GM12878 (cell line): ENCODE measurements at regions of chrX and their contacts with region 1.

Region 1: GRCh38 chrX:37825209-37825842 is 22.0 kb downstream of the DYNLT3 start:
- DNase-seq: no peak
- ATAC-seq: peak; percentile 89
- H3K4me3 ChIP-seq: no peak overlapping the region
- H3K27ac ChIP-seq: no peak overlapping the region
- H3K4me1 ChIP-seq: peaks cover 7% of the 10 kb centered on the region
- H3K27me3 ChIP-seq: no peaks in the 10 kb centered on the region
- CTCF ChIP-seq: peak; percentile 81 to 98 (median 96)
- EP300 ChIP-seq: no peak
- POLR2A ChIP-seq: no peak
- RAD21 ChIP-seq: peak; percentile 99

Region 2: GRCh38 chrX:37745354-37745753 is 80.0 kb before region 1 on chrX:
- CTCF ChIA-PET with region 1: interaction called, 376 read pairs
- POLR2A ChIA-PET with region 1: interaction called, 9 read pairs
- RAD21 ChIA-PET with region 1: interaction called, 186 read pairs
- SMC1A ChIA-PET with region 1: interaction called, 264 read pairs
- in situ Hi-C with region 1: loop called (anchors 5 kb)
- intact Hi-C with region 1: loop called (anchors 1 kb)
- DNase-seq: peak; percentile 53
- ATAC-seq: peak; percentile 86
- H3K4me3 ChIP-seq: no peak overlapping the region
- H3K27ac ChIP-seq: peak overlapping the region; percentile 69
- H3K4me1 ChIP-seq: peaks cover 15% of the 10 kb centered on the region
- H3K27me3 ChIP-seq: no peaks in the 10 kb centered on the region; a peak in 1 of 4 replicates
- CTCF ChIP-seq: peak; percentile 84 to 91 (median 84)
- EP300 ChIP-seq: no peak
- POLR2A ChIP-seq: no peak
- RAD21 ChIP-seq: peak; percentile 97

Region 3: GRCh38 chrX:37776283-37776986 is 48.9 kb before region 1 on chrX:
- CTCF ChIA-PET with region 1: interaction called, 73 read pairs
- POLR2A ChIA-PET with region 1: interaction called, 4 read pairs
- RAD21 ChIA-PET with region 1: interaction called, 29 read pairs
- SMC1A ChIA-PET with region 1: interaction called, 138 read pairs
- in situ Hi-C with region 1: no loop called
- intact Hi-C with region 1: no loop called
- DNase-seq: no peak
- ATAC-seq: peak; percentile 80
- H3K4me3 ChIP-seq: peak overlapping the region; percentile 23; the same call in 1 of the 2 replicates
- H3K27ac ChIP-seq: peak overlapping the region; percentile 85
- H3K4me1 ChIP-seq: peaks cover 22% of the 10 kb centered on the region
- H3K27me3 ChIP-seq: no peaks in the 10 kb centered on the region
- CTCF ChIP-seq: no peak
- EP300 ChIP-seq: no peak
- POLR2A ChIP-seq: no peak
- RAD21 ChIP-seq: no peak

Region 4: DNA sequence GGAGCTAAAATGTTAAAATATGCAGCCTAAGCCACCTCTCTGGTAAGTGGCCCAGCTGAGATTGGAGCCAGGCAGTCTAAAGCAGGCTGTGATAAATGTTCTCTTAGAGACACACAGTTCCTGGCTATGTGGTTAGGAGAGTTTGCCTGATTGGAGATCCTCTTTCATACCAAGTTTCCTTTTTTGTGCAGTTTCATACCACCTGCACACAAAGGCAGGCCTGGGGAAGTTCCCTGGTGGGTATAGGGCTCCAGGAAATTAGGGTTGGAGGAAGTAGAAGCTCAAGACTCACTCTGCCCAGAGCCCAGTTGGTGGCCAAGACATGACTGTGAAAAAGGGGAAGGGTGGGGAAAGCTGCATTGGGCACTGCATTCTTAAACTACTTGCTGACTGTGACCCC is 28.5 kb before region 1 on chrX:
- CTCF ChIA-PET with region 1: interaction called, 17 read pairs
- POLR2A ChIA-PET with region 1: no interaction called
- RAD21 ChIA-PET with region 1: interaction called, 7 read pairs
- SMC1A ChIA-PET with region 1: interaction called, 21 read pairs
- in situ Hi-C with region 1: no loop called
- intact Hi-C with region 1: no loop called
- DNase-seq: no peak
- ATAC-seq: peak; percentile 81
- H3K4me3 ChIP-seq: no peak overlapping the region
- H3K27ac ChIP-seq: peak overlapping the region; percentile 38
- H3K4me1 ChIP-seq: peaks cover 21% of the 10 kb centered on the region
- H3K27me3 ChIP-seq: no peaks in the 10 kb centered on the region
- CTCF ChIP-seq: no peak
- EP300 ChIP-seq: no peak
- POLR2A ChIP-seq: no peak
- RAD21 ChIP-seq: no peak

Region 5: DNA sequence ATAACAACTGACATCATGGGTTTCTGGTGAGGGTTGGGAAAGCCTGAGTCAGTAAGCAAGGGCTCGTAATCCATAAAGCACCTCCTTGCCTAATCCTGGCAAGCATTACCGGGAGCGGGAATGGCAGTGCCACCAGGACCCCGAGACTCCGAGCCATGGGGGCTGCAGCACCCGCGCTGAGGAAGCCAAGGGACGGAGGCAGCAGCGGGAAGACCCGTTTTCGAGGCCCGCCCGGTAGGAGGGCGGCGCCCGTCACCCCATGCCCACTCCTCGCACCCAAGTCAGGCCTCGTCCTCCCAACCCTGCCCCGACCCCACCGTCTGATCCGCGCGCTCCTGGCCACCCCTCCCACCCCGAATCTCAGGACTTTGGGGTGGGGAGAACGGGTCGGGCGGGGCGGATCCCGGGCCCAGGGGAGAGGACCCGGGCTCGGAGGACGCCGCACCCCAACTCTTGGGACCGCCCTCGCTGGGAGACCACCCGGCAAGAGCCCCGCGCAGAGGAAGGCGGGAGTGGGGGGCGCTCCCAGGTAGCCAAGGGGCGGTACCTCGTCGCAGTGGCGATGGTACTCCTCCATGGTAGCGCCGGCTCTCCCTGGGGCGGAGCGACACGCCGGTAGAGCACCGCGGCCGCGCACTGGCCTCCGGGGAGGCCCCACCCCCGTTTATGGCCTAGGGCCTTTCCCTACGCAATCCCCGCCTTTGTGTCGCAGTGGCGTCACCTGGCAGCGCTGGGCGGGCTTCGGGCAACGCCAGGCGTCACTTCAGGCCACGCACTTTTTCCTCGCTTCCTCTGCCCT is 21.8 kb after region 1 on chrX and contains the start of gene DYNLT3:
- CTCF ChIA-PET with region 1: interaction called, 29 read pairs
- POLR2A ChIA-PET with region 1: no interaction called
- RAD21 ChIA-PET with region 1: no interaction called
- SMC1A ChIA-PET with region 1: interaction called, 31 read pairs
- in situ Hi-C with region 1: no loop called
- intact Hi-C with region 1: no loop called
- DNase-seq: peak; percentile 39
- ATAC-seq: peak; percentile 99
- H3K4me3 ChIP-seq: peak within 1 kb of the TSS; percentile 81
- H3K27ac ChIP-seq: peak within 1 kb of the TSS; percentile 46; the same call in 1 of the 2 replicates
- H3K4me1 ChIP-seq: no peaks in the 10 kb centered on the region
- H3K27me3 ChIP-seq: no peaks in the 10 kb centered on the region
- CTCF ChIP-seq: no peak
- EP300 ChIP-seq: no peak
- POLR2A ChIP-seq: peak; percentile 66
- RAD21 ChIP-seq: no peak
- polyA plus RNA-seq, gene DYNLT3: 14.9 to 19.2 TPM